K562 (cell line): ENCODE measurements at regions of chr3 and their contacts with region 1.

Region 1: DNA sequence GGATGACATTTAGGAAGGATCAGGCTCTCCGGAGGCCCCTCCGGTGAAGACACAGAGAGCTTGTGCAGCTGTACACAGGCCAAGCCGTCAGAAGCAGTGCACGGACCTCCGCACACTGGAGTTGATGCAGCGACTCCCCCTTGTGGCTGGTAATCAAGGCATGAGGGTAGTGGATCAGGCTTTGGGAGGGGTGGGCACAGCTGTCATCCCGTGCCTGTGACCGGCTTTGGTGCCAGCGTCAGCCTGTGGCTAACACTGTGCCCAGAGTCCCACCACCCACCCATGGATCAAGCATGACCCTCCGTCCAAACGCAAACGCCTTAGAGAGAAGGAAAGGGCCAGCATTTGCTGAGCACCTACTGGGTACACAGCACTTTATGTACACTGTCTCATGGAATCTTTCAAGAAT is 8.2 kb upstream of the GRIP2 start:
- DNase-seq: peak; percentile 74 to 78 (median 77)
- ATAC-seq: peak; percentile 96
- H3K4me3 ChIP-seq: no peak overlapping the region
- H3K27ac ChIP-seq: no peak overlapping the region
- H3K4me1 ChIP-seq: peaks cover 0 to 16% of the 10 kb centered on the region in 2 experiments; a peak in 2 of 5 replicates
- H3K27me3 ChIP-seq: peaks cover 12 to 74% of the 10 kb centered on the region in 2 experiments; a peak in 4 of 5 replicates
- CTCF ChIP-seq: peak; percentile 85 to 90 (median 90)
- EP300 ChIP-seq: no peak
- POLR2A ChIP-seq: no peak
- RAD21 ChIP-seq: peak; percentile 69 to 91

Region 2: DNA sequence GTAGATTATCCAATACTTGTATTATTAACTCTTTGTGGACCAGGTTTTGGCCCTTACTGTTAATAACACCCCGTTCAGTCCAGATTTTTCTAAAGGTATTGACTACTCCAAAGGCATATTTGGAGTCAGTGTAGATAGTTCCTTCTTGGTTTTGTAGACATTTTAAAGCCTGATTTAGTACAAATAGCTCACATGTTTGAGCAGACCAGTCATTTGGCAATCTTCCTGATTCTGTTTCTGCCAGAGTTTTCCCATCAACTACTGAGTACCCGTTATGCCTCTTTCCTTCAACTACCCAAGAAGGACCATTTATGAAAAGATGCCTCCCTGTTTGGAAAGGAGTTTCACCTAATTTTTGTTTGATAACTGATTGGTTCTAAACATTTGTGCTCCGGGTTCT is 505.6 kb before region 1 on chr3:
- CTCF ChIA-PET with region 1: no interaction called
- POLR2A ChIA-PET with region 1: no interaction called
- in situ Hi-C with region 1: no loop called
- intact Hi-C with region 1: no loop called
- DNase-seq: no peak
- ATAC-seq: no peak
- H3K4me3 ChIP-seq: no peak overlapping the region
- H3K27ac ChIP-seq: no peak overlapping the region
- H3K4me1 ChIP-seq: no peaks in the 10 kb centered on the region
- H3K27me3 ChIP-seq: peaks cover 0 to 4% of the 10 kb centered on the region in 2 experiments; a peak in 1 of 5 replicates
- CTCF ChIP-seq: no peak
- EP300 ChIP-seq: no peak
- POLR2A ChIP-seq: no peak
- RAD21 ChIP-seq: no peak

Region 3: GRCh38 chr3:14391033-14391432 is 157.3 kb before region 1 on chr3:
- CTCF ChIA-PET with region 1: no interaction called
- POLR2A ChIA-PET with region 1: no interaction called
- in situ Hi-C with region 1: no loop called
- intact Hi-C with region 1: no loop called
- DNase-seq: peak in 2 of 4 experiments; percentile 40 to 56
- ATAC-seq: peak; percentile 60
- H3K4me3 ChIP-seq: no peak overlapping the region
- H3K27ac ChIP-seq: no peak overlapping the region; the same call in 2 of the 3 replicates
- H3K4me1 ChIP-seq: peaks cover 13 to 14% of the 10 kb centered on the region in 2 experiments
- H3K27me3 ChIP-seq: no peaks in the 10 kb centered on the region
- CTCF ChIP-seq: no peak
- EP300 ChIP-seq: peak; percentile 50
- POLR2A ChIP-seq: no peak
- RAD21 ChIP-seq: no peak

Region 4: GRCh38 chr3:14461748-14462324 is 86.5 kb before region 1 on chr3:
- CTCF ChIA-PET with region 1: no interaction called
- POLR2A ChIA-PET with region 1: no interaction called
- in situ Hi-C with region 1: no loop called
- intact Hi-C with region 1: no loop called
- DNase-seq: peak in 3 of 4 experiments; percentile 41 to 51 (median 42)
- ATAC-seq: peak; percentile 65
- H3K4me3 ChIP-seq: no peak overlapping the region
- H3K27ac ChIP-seq: no peak overlapping the region
- H3K4me1 ChIP-seq: peaks cover 9 to 12% of the 10 kb centered on the region in 2 experiments; a peak in 3 of 5 replicates
- H3K27me3 ChIP-seq: no peaks in the 10 kb centered on the region
- CTCF ChIP-seq: peak; percentile 73 to 98 (median 97)
- EP300 ChIP-seq: no peak
- POLR2A ChIP-seq: no peak
- RAD21 ChIP-seq: peak; percentile 88 to 93

Region 5: GRCh38 chr3:14508961-14509795 is 39.1 kb before region 1 on chr3:
- CTCF ChIA-PET with region 1: interaction called, 28 read pairs
- POLR2A ChIA-PET with region 1: interaction called, 3 read pairs
- in situ Hi-C with region 1: no loop called
- intact Hi-C with region 1: loop called (anchors 1 kb)
- DNase-seq: peak; percentile 84 to 96 (median 94)
- ATAC-seq: peak; percentile 89
- H3K4me3 ChIP-seq: no peak overlapping the region
- H3K27ac ChIP-seq: no peak overlapping the region
- H3K4me1 ChIP-seq: peaks cover 0 to 36% of the 10 kb centered on the region in 2 experiments; a peak in 2 of 5 replicates
- H3K27me3 ChIP-seq: peaks cover 8 to 56% of the 10 kb centered on the region in 2 experiments; a peak in 4 of 5 replicates
- CTCF ChIP-seq: peak; percentile 87 to 90 (median 89)
- EP300 ChIP-seq: no peak
- POLR2A ChIP-seq: no peak
- RAD21 ChIP-seq: peak; percentile 55 to 81

Region 6: DNA sequence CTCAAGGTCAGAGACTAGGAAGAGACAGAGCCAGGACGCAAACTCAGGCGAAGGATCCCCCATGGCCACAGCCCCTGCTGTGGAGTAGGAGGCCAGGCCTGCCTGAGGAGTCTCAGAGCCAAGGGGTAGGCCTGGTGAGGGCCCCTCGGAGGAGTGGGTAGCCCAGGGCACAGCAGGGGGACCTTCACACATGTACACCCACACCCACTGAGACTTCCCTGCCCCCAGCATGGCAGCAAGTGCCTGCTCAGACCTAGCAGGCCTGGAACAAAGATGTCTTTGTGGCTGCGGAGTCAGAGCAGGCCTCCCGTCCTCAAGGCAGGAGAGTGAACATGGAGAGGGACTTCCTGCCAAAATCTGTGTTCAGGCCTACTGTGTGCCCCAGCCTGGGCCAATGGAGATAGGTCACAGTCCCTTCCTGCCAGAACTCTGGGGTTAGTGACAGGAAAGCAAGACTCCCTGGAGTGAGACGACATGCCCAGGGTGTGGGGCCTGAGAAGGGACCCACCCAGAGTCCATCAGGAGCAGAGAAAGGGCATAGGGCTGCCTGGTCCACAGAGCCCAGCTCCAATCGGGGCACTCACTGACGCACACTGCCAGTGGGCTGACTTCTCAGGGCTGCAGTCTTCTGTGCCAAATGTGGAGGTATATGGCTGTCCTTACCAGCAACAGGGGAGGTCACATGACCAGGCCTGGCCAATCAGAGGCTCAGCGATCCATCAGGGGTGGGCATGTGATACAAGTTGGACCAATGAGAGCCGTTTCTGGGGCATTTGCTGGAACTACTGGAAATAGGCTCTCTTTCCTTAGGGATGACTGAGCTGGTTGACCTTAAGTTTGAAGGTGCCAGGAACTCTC is 10.5 kb before region 1 on chr3:
- CTCF ChIA-PET with region 1: no interaction called
- POLR2A ChIA-PET with region 1: interaction called, 17 read pairs
- in situ Hi-C with region 1: no loop called
- intact Hi-C with region 1: no loop called
- DNase-seq: peak; percentile 57 to 90 (median 86)
- ATAC-seq: peak; percentile 80
- H3K4me3 ChIP-seq: no peak overlapping the region
- H3K27ac ChIP-seq: no peak overlapping the region
- H3K4me1 ChIP-seq: peaks cover 5 to 14% of the 10 kb centered on the region in 2 experiments
- H3K27me3 ChIP-seq: peaks cover 2 to 19% of the 10 kb centered on the region in 2 experiments; a peak in 3 of 5 replicates
- CTCF ChIP-seq: no peak
- EP300 ChIP-seq: no peak
- POLR2A ChIP-seq: no peak
- RAD21 ChIP-seq: no peak